CD14-positive monocyte (primary cell): ENCODE measurements at regions of chr19 and their contacts with region 1.

Region 1: GRCh38 chr19:54875506-54875905 is 1.5 kb downstream of the FCAR start:
- DNase-seq: peak; percentile 80 to 95 (median 86)
- H3K4me3 ChIP-seq: peak overlapping the region; percentile 70 to 99 (median 77)
- H3K4me3 Mint-ChIP-seq: peak overlapping the region; percentile 83 to 99
- H3K27ac ChIP-seq: peak overlapping the region; percentile 87 to 99
- H3K27ac Mint-ChIP-seq: peak overlapping the region; percentile 97 to 100 (median 99)
- H3K4me1 ChIP-seq: peaks cover 81 to 85% of the 10 kb centered on the region in 2 donors
- H3K4me1 Mint-ChIP-seq: peaks cover 78% of the 10 kb centered on the region
- H3K27me3 ChIP-seq: no peaks in the 10 kb centered on the region
- H3K27me3 Mint-ChIP-seq: peaks cover 0 to 18% (median 6%) of the 10 kb centered on the region in 3 donors
- CTCF ChIP-seq: no peak

Region 2: GRCh38 chr19:53333463-53334449 is 1541.8 kb before region 1 on chr19 and contains the start of gene ZNF845:
- intact Hi-C with region 1: no loop called
- DNase-seq: peak; percentile 80 to 82 (median 82)
- H3K4me3 ChIP-seq: peak within 1 kb of the TSS; percentile 72 to 91 (median 79)
- H3K4me3 Mint-ChIP-seq: peak within 1 kb of the TSS; percentile 97 to 99
- H3K27ac ChIP-seq: peak within 1 kb of the TSS; percentile 11 to 77
- H3K27ac Mint-ChIP-seq: peak within 1 kb of the TSS; percentile 84 to 91 (median 89)
- H3K4me1 ChIP-seq: peaks cover 16 to 17% of the 10 kb centered on the region in 2 donors
- H3K4me1 Mint-ChIP-seq: peaks cover 21% of the 10 kb centered on the region
- H3K27me3 ChIP-seq: no peaks in the 10 kb centered on the region
- H3K27me3 Mint-ChIP-seq: peaks cover 0 to 8% (median 0%) of the 10 kb centered on the region in 3 donors
- CTCF ChIP-seq: no peak
- polyA plus RNA-seq, gene ZNF845: 0.51 to 3.6 (median 2.6) TPM

Region 3: DNA sequence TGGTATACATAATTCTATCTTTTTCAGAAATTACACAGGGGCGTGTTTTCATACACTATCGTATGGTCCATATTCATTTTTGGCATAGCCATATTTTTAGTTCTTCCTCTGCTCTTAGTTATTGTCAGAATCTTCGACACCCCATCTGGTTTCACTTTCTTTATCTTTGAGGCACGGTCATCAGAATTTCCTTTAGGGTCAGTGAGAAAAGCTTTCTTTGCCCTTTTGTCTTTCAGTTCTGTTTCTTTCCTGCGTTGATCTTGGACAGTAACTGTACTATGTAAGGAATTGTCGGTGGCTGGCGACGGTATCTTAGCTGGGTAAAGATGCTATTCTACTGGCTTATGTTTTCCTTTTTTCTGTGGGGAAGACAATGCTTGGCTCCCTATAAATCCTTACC is 82.7 kb before region 1 on chr19:
- intact Hi-C with region 1: loop called in 1 of 2 experiments (anchors 10 kb)
- DNase-seq: peak; percentile 35 to 69 (median 69)
- H3K4me3 ChIP-seq: peak overlapping the region; percentile 44 to 73 (median 71)
- H3K4me3 Mint-ChIP-seq: peak overlapping the region; percentile 71 to 86
- H3K27ac ChIP-seq: peak overlapping the region in 1 of 2 donors; percentile 81
- H3K27ac Mint-ChIP-seq: peak overlapping the region; percentile 79 to 94 (median 87)
- H3K4me1 ChIP-seq: peaks cover 30 to 32% of the 10 kb centered on the region in 2 donors
- H3K4me1 Mint-ChIP-seq: peaks cover 24% of the 10 kb centered on the region
- H3K27me3 ChIP-seq: no peaks in the 10 kb centered on the region
- H3K27me3 Mint-ChIP-seq: peaks cover 0 to 3% (median 1%) of the 10 kb centered on the region in 3 donors
- CTCF ChIP-seq: no peak